Activated CD4-positive, alpha-beta T cell treated with anti-CD3 and anti-CD28 coated beads, Interleukin-2, amount 10 ng/mL, durations not matched to agents 24 days and 14 days (primary cell): ENCODE measurements at regions of chr6 and their contacts with region 1.

Region 1: GRCh38 chr6:116461932-116462885 is 1.0 kb downstream of the CALHM6 start:
- DNase-seq: peak; percentile 91
- H3K4me3 Mint-ChIP-seq: peak overlapping the region; percentile 75
- H3K27ac Mint-ChIP-seq: peak overlapping the region; percentile 85
- H3K4me1 Mint-ChIP-seq: peaks cover 76% of the 10 kb centered on the region
- H3K27me3 Mint-ChIP-seq: no peaks in the 10 kb centered on the region

Region 2: GRCh38 chr6:115159733-115160132 is 1302.5 kb before region 1 on chr6:
- intact Hi-C with region 1: no loop called
- DNase-seq: no peak
- H3K4me3 Mint-ChIP-seq: no peak overlapping the region
- H3K27ac Mint-ChIP-seq: no peak overlapping the region
- H3K4me1 Mint-ChIP-seq: no peaks in the 10 kb centered on the region
- H3K27me3 Mint-ChIP-seq: no peaks in the 10 kb centered on the region

Region 3: DNA sequence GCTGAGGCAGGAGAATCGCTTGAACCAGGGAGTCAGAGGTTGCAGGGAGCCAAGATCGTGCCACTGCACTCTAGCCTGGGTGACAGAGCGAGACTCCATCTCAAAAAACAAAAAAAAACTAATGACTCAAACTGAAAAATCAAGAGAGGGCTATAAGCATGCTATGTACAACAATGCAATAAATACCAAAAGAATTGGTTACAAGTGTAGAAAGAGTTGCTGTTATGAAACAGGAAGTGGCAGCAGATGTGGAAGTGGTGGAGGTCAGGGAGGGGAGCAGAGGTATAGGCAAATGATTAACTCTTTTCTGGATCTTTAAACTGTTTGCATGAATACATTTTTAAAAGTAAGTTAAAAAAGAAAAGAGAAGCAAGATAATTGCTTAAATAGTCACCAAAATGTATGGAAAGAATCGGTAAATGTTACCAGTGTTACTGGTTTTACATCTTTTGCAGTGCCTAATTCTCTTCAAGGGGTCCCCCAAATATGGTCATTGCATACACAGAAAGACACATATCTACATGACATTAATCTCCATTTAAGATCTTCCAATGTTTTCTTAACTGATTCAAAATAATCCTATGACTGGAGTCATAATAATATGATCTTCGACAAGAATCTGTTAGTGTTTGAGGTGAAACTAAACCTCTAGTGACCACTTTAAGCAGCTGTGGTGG is 13.9 kb after region 1 on chr6:
- intact Hi-C with region 1: loop called (anchors 1 kb)
- DNase-seq: peak; percentile 85
- H3K4me3 Mint-ChIP-seq: peak overlapping the region; percentile 30
- H3K27ac Mint-ChIP-seq: peak overlapping the region; percentile 68
- H3K4me1 Mint-ChIP-seq: peaks cover 23% of the 10 kb centered on the region
- H3K27me3 Mint-ChIP-seq: peaks cover 9% of the 10 kb centered on the region

Region 4: GRCh38 chr6:116648156-116648555 is 185.9 kb after region 1 on chr6:
- intact Hi-C with region 1: no loop called
- DNase-seq: no peak
- H3K4me3 Mint-ChIP-seq: no peak overlapping the region
- H3K27ac Mint-ChIP-seq: no peak overlapping the region
- H3K4me1 Mint-ChIP-seq: peaks cover 11% of the 10 kb centered on the region
- H3K27me3 Mint-ChIP-seq: no peaks in the 10 kb centered on the region